SK-N-SH (cell line): ENCODE measurements at regions of chrX and their contacts with region 1.

Region 1: DNA sequence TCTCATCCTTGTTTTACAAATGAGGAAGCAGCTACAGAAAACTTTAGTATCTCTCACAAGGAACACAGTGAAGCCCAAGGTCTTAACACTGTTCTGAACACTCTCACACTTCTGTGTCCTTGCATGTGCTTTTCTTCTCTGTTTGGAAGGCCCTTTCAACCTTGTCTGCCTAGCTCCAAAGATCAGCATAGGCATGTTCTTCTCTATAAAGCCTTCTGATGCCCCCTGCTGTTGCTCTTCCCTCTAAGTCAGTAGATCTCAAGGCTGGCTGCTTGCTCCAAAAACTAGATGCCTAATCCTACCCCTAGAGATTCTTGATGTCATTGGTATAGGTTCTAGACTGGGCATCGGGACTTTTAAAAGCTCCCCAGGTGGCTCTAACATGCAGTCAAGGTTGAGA is 5.9 kb downstream of the APOO start:
- DNase-seq: peak; percentile 49
- H3K4me3 ChIP-seq: peak overlapping the region in 1 of 2 experiments; percentile 25; a peak in 2 of 4 replicates
- H3K27ac ChIP-seq: peak overlapping the region; percentile 34 to 55; a peak in 3 of 4 replicates
- H3K4me1 ChIP-seq: peaks cover 3 to 10% of the 10 kb centered on the region in 2 experiments; a peak in 3 of 4 replicates
- H3K27me3 ChIP-seq: no peaks in the 10 kb centered on the region
- CTCF ChIP-seq: peak; percentile 63
- EP300 ChIP-seq: no peak
- RAD21 ChIP-seq: peak; percentile 74

Region 2: DNA sequence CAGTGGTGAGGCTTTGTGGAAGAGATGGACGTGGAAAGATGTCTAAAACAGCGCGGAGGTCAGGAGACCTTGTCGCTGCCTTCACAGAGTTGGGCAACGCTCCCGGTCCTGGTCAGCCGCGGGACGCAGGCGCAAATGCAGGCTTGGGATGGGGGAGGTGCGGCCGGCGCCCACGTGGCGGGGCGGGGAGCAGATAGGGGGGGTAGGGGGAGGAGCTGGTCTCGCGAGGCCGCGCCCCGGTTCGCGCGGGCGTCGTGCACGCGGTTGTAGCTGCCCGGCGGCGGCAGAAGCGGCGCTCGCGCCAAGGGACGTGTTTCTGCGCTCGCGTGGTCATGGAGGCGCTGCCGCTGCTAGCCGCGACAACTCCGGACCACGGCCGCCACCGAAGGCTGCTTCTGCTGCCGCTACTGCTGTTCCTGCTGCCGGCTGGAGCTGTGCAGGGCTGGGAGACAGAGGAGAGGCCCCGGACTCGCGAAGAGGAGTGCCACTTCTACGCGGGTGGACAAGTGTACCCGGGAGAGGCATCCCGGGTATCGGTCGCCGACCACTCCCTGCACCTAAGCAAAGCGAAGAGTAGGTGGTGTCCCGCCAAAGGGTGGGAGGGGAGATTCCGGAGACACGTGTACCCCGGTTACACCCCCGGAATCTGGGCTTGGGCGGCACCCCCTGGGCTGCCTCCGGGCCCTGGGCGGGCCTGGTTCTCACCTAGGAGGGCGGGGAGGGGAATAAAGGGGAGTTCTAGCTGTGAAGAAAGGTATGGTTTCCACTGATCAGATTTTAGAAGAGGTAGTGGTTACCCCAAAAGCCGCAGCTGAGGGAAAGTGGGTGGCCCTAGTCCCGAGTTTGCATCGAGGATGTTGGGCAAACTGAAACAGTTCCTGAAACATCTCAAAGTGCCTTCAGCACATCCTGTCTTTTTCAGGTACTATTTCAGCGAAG is 234.3 kb before region 1 on chrX and contains the start of gene PRDX4:
- CTCF ChIA-PET with region 1: interaction called, 10 read pairs
- POLR2A ChIA-PET with region 1: no interaction called
- DNase-seq: peak; percentile 95
- H3K4me3 ChIP-seq: peak within 1 kb of the TSS; percentile 63 to 70
- H3K27ac ChIP-seq: peak within 1 kb of the TSS; percentile 59 to 83; a peak in 3 of 4 replicates
- H3K4me1 ChIP-seq: peaks cover 2 to 4% of the 10 kb centered on the region in 2 experiments; a peak in 3 of 4 replicates
- H3K27me3 ChIP-seq: no peaks in the 10 kb centered on the region
- CTCF ChIP-seq: no peak
- EP300 ChIP-seq: no peak
- RAD21 ChIP-seq: no peak
- polyA plus RNA-seq, gene PRDX4: 140 and 164 TPM in 2 replicates

Region 3: GRCh38 chrX:23699636-23700194 is 202.1 kb before region 1 on chrX:
- CTCF ChIA-PET with region 1: interaction called, 67 read pairs
- POLR2A ChIA-PET with region 1: interaction called, 3 read pairs
- DNase-seq: no peak
- H3K4me3 ChIP-seq: peak overlapping the region in 1 of 2 experiments; percentile 20; a peak in 1 of 4 replicates
- H3K27ac ChIP-seq: no peak overlapping the region
- H3K4me1 ChIP-seq: no peaks in the 10 kb centered on the region
- H3K27me3 ChIP-seq: peaks cover 23% of the 10 kb centered on the region
- CTCF ChIP-seq: no peak
- EP300 ChIP-seq: no peak
- RAD21 ChIP-seq: no peak

Region 4: DNA sequence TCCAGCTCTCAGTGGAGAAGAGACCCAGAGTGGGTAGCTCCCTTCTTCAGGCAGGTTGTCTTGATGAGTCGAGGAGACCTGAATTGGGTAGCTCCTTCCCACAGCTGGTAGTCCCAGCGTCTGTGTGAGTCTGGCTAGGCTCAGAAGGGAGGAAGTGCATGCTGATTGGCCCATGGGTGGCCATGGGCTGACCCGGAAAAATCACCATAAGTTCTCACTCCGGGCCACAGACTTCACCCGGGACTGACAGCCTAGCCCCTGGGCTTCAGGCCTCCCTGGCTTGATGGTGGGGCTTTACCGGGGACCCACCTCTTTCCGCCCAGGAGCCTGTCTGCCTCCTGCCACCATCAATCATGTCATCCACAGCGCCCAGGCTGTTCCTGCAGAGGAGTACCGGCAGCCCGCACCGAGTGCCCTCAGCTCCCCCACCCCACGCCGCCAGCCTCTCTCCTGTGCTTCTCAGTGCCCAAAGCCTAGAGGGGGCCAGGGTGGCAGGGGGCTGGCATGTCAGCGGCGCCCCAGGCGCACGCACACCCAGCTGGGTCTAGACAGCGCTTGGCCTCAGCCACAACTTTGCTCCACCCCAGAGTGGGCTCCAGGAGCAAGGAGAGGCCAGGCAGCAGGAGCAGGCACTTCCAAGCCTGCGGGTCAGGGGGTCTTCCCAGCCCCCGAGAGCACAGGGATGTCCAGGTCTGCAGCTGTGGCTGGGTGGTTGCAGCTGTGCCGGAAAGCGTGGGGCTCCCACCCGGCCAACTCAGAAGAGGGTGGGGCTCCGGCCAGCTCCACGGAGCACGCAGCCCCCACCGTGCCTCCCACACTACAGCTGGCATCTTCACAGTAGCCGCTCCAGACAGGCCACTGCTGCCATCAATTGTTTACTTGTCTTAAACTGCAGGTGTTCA is 134.9 kb before region 1 on chrX:
- CTCF ChIA-PET with region 1: interaction called, 10 read pairs
- POLR2A ChIA-PET with region 1: no interaction called
- DNase-seq: peak; percentile 41
- H3K4me3 ChIP-seq: peak overlapping the region in 1 of 2 experiments; percentile 13; a peak in 2 of 4 replicates
- H3K27ac ChIP-seq: no peak overlapping the region
- H3K4me1 ChIP-seq: no peaks in the 10 kb centered on the region; a peak in 1 of 4 replicates
- H3K27me3 ChIP-seq: no peaks in the 10 kb centered on the region; the same call in 1 of the 2 replicates
- CTCF ChIP-seq: no peak
- EP300 ChIP-seq: no peak
- RAD21 ChIP-seq: no peak

Region 5: DNA sequence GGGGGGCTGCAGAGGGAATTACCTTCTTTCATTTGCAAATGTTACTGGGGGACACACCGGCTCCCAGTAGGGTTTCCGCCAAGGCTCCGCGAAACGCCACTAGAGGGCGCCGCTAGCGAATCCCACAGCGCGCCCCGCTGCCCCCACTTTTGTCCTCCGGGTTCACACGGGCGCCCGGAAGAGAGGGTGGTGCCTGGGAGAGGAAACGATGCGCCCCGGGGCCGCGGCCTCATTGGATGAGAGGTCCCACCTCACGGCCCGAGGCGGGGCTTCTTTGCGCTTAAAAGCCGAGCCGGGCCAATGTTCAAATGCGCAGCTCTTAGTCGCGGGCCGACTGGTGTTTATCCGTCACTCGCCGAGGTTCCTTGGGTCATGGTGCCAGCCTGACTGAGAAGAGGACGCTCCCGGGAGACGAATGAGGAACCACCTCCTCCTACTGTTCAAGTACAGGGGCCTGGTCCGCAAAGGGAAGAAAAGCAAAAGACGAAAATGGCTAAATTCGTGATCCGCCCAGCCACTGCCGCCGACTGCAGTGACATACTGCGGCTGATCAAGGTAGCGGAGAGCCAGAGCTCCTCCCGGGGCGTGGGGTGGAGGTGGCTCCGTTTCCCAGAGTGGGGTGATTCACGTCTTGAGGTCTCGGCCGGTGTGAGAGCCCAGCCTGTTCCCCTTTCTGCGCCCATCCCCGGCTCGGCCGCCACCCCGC is 118.8 kb before region 1 on chrX and contains the start of gene SAT1:
- CTCF ChIA-PET with region 1: interaction called, 63 read pairs
- POLR2A ChIA-PET with region 1: interaction called, 9 read pairs
- DNase-seq: peak; percentile 91
- H3K4me3 ChIP-seq: peak within 1 kb of the TSS; percentile 57 to 72
- H3K27ac ChIP-seq: peak within 1 kb of the TSS in 1 of 2 experiments; percentile 87; a peak in 2 of 4 replicates
- H3K4me1 ChIP-seq: no peaks in the 10 kb centered on the region; a peak in 2 of 4 replicates
- H3K27me3 ChIP-seq: no peaks in the 10 kb centered on the region; the same call in 1 of the 2 replicates
- CTCF ChIP-seq: peak; percentile 79
- EP300 ChIP-seq: no peak
- RAD21 ChIP-seq: peak; percentile 67
- polyA plus RNA-seq, gene SAT1: 131 and 176 TPM in 2 replicates

Region 6: DNA sequence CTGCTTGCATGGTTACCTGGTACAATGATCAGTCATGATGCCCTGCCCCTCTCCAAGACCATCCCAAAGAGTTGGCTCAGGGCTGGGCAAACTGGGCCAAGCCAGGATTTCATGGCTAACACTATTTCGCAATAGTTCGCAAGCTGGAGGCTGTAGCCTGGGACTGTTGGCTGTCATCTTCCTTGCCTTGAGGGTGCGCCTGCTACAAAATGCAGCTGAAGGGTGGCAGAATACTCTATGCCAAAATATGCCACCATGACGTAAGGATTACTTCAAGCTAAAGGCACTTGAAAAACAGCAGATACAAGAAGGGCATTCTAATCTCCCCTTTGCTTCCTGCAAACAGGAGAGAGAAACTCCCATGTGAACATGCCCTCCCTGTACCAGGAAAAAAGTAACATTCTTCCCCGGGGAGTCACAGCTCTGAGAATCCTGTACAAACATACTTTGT is 97.8 kb before region 1 on chrX:
- CTCF ChIA-PET with region 1: interaction called, 11 read pairs
- POLR2A ChIA-PET with region 1: no interaction called
- DNase-seq: no peak
- H3K4me3 ChIP-seq: no peak overlapping the region
- H3K27ac ChIP-seq: peak overlapping the region in 1 of 2 experiments; percentile 88; a peak in 2 of 4 replicates
- H3K4me1 ChIP-seq: peaks cover 0 to 18% of the 10 kb centered on the region in 2 experiments; a peak in 1 of 4 replicates
- H3K27me3 ChIP-seq: no peaks in the 10 kb centered on the region; the same call in 1 of the 2 replicates
- CTCF ChIP-seq: no peak
- EP300 ChIP-seq: no peak
- RAD21 ChIP-seq: no peak

Region 7: DNA sequence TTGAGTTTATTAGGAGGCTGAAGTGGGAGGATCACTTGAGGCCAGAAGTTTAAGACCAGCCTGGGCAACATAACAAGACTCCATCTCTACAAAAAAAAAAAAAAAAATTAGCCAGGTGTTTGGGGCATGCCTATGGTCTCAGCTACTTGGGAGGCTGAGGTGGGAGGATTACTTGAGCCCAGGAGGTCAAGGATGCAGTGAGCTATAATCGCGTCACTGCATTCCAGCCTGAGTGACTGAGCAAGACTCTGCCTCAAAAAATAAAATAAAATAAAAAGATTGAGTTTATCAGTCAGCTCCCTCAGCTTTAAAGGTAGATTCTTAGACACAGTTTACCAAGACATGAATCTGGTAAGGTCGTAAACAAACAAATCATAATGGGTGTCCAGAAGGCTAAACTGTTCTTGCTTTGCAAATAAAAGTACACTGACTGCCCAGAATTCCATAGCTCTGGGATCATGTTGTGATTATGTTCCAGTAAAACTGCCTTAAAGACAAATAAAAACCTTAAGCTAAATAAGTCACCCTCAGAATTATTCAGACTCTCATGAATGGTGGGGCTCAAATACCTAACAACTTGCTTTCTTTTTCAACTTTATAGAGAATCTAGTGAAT is 12.8 kb before region 1 on chrX:
- CTCF ChIA-PET with region 1: interaction called, 21 read pairs
- POLR2A ChIA-PET with region 1: no interaction called
- DNase-seq: no peak
- H3K4me3 ChIP-seq: no peak overlapping the region
- H3K27ac ChIP-seq: peak overlapping the region in 1 of 2 experiments; percentile 40; a peak in 1 of 4 replicates
- H3K4me1 ChIP-seq: peaks cover 0 to 9% of the 10 kb centered on the region in 2 experiments; a peak in 1 of 4 replicates
- H3K27me3 ChIP-seq: peaks cover 5% of the 10 kb centered on the region; the same call in 1 of the 2 replicates
- CTCF ChIP-seq: no peak
- EP300 ChIP-seq: no peak
- RAD21 ChIP-seq: no peak